ENCODE measurements at regions of chr9 and their contacts with region 1.

Region 1: GRCh38 chr9:34899535-34900158 is 58.4 kb upstream of the PHF24 start:
- DNase-seq: peak; percentile 67 to 90 (median 76)
- ATAC-seq: peak; percentile 100
- H3K4me3 ChIP-seq: no peak overlapping the region
- H3K4me3 Mint-ChIP-seq: no peak overlapping the region
- H3K27ac ChIP-seq: no peak overlapping the region
- H3K27ac Mint-ChIP-seq: no peak overlapping the region
- H3K4me1 ChIP-seq: no peaks in the 10 kb centered on the region
- H3K4me1 Mint-ChIP-seq: no peaks in the 10 kb centered on the region
- H3K27me3 ChIP-seq: peaks cover 7 to 20% of the 10 kb centered on the region in 2 experiments
- H3K27me3 Mint-ChIP-seq: peaks cover 57% of the 10 kb centered on the region
- CTCF ChIP-seq: peak; percentile 88

Region 2: DNA sequence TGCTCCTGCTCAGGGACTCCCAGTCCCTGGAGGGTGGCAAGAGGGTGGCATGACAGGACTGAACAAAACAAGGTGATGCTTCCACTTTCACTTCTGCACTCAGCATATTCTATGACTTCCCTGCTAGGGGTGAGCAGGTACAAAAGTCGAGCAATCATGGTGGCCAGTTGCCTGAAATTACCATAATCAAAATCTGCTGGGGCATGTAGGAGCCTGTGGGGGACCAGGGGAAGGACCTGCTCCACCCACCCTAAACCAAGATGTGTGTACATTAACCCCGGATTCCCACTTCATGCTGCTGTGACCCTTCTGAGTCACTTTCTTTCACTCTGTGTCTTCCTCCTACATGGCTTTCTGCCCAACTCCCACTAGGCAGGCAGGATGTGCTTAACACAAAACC is 14.9 kb before region 1 on chr9:
- CTCF ChIA-PET with region 1: interaction called, 15 read pairs
- POLR2A ChIA-PET with region 1: no interaction called
- intact Hi-C with region 1: no loop called
- DNase-seq: peak in 1 of 14 experiments; percentile 15
- ATAC-seq: no peak
- H3K4me3 ChIP-seq: no peak overlapping the region
- H3K4me3 Mint-ChIP-seq: no peak overlapping the region
- H3K27ac ChIP-seq: no peak overlapping the region
- H3K27ac Mint-ChIP-seq: no peak overlapping the region
- H3K4me1 ChIP-seq: peaks cover 8% of the 10 kb centered on the region
- H3K4me1 Mint-ChIP-seq: no peaks in the 10 kb centered on the region
- H3K27me3 ChIP-seq: no peaks in the 10 kb centered on the region
- H3K27me3 Mint-ChIP-seq: peaks cover 8% of the 10 kb centered on the region
- CTCF ChIP-seq: no peak

Region 3: DNA sequence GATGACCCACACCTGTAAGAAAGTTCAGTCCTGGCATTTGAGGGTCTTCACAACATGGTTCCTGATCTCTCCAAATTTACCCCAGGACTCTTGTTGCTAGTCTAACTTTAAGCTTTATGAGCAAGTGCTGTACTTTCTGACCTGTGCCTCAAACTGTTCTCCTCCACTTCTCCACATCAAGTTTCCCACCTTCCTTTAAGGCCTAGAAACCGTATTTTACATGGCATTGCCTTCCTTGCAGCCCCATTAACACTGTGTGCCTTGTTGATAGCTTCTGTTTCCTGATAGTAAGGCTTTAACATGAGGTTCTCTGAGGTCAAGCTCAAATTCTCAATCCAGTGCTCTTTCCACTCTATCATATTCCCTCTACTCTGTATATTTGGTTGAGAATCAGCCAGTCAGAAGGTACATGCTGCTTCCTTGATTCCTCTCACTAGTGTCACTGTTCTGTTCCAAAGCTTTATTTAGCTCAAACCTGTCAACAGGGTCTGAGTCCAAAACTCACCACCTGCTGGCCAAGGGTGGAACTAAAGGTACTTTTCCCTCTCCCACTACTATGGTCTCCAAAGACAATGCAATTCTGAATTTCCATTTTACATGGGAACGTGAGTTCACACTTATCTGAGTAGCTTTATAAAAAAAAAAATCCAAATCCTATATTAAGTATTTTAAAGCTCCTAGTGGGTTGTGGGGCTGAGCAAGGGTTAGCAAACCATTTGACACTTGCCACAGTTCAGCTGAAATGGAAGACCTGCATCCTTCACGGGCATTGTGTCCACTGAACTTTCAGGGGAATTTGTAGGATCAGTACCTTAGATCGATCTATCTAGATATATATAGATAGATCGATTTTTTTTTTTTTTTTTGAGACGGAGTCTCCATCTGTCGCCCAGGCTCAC is 151.7 kb after region 1 on chr9:
- CTCF ChIA-PET with region 1: interaction called, 47 read pairs
- POLR2A ChIA-PET with region 1: interaction called, 16 read pairs
- intact Hi-C with region 1: loop called (anchors 1 kb)
- DNase-seq: peak; percentile 17 to 69 (median 44)
- ATAC-seq: peak; percentile 85
- H3K4me3 ChIP-seq: no peak overlapping the region
- H3K4me3 Mint-ChIP-seq: no peak overlapping the region
- H3K27ac ChIP-seq: no peak overlapping the region
- H3K27ac Mint-ChIP-seq: no peak overlapping the region
- H3K4me1 ChIP-seq: no peaks in the 10 kb centered on the region
- H3K4me1 Mint-ChIP-seq: peaks cover 5% of the 10 kb centered on the region
- H3K27me3 ChIP-seq: no peaks in the 10 kb centered on the region
- H3K27me3 Mint-ChIP-seq: no peaks in the 10 kb centered on the region
- CTCF ChIP-seq: peak; percentile 70

Region 4: DNA sequence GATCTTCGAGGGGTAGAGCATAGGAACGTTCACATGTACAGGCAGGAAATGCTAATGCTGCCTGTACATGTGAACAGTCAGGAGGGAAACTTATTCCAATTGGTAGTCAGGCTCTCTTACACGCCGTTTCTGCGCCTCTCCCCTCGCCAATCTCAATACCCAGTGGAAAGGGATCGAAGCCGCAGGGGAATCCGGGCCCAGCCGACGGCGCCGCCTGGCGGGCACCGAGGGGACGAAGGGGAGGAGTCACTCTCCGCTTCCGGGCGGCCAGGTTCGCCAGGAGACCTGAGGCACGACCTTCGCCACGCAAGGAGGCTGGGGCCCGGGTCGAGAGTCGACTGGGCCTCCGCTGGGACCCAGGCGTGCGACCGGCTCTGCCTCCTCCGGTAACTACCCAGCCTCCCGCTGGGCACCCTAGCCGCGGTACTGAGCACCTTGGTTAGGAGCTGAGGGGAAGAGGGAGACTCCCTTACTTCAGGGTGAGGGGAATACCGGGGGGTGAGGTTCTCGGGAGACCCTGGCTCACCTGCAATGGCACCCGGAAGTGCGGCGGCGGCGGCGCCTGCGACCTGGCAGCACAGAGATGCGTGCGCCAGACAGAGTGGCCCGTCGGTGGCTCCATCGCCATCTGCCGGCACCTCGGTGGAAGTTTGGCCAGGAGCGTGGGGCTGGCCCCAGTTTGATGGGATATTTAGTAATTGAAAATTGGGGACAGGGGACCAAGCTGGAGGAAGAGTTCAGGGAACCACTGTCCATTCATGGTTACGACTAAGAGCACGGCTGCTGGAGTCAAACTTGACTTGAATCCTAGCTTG is 196.6 kb after region 1 on chr9 and contains the start of gene PIGO:
- CTCF ChIA-PET with region 1: interaction called, 27 read pairs
- POLR2A ChIA-PET with region 1: interaction called, 13 read pairs
- intact Hi-C with region 1: loop called (anchors 1 kb)
- DNase-seq: peak; percentile 81 to 95 (median 88)
- ATAC-seq: peak; percentile 88
- H3K4me3 ChIP-seq: peak within 1 kb of the TSS; percentile 82
- H3K4me3 Mint-ChIP-seq: peak within 1 kb of the TSS; percentile 92
- H3K27ac ChIP-seq: peak within 1 kb of the TSS; percentile 96 to 99
- H3K27ac Mint-ChIP-seq: peak within 1 kb of the TSS; percentile 93
- H3K4me1 ChIP-seq: peaks cover 26% of the 10 kb centered on the region
- H3K4me1 Mint-ChIP-seq: peaks cover 43% of the 10 kb centered on the region
- H3K27me3 ChIP-seq: no peaks in the 10 kb centered on the region
- H3K27me3 Mint-ChIP-seq: no peaks in the 10 kb centered on the region
- CTCF ChIP-seq: peak; percentile 81
- total RNA-seq, gene PIGO: 17.5 to 18.9 TPM

Region 5: GRCh38 chr9:35258676-35259474 is 359.2 kb after region 1 on chr9:
- CTCF ChIA-PET with region 1: interaction called, 3 read pairs
- POLR2A ChIA-PET with region 1: interaction called, 4 read pairs
- intact Hi-C with region 1: loop called (anchors 1 to 2 kb)
- DNase-seq: peak; percentile 17 to 67 (median 34)
- ATAC-seq: peak; percentile 43
- H3K4me3 ChIP-seq: no peak overlapping the region
- H3K4me3 Mint-ChIP-seq: no peak overlapping the region
- H3K27ac ChIP-seq: no peak overlapping the region
- H3K27ac Mint-ChIP-seq: no peak overlapping the region
- H3K4me1 ChIP-seq: no peaks in the 10 kb centered on the region
- H3K4me1 Mint-ChIP-seq: no peaks in the 10 kb centered on the region
- H3K27me3 ChIP-seq: peaks cover 0 to 3% of the 10 kb centered on the region in 2 experiments
- H3K27me3 Mint-ChIP-seq: peaks cover 11% of the 10 kb centered on the region
- CTCF ChIP-seq: peak; percentile 64

Region 6: DNA sequence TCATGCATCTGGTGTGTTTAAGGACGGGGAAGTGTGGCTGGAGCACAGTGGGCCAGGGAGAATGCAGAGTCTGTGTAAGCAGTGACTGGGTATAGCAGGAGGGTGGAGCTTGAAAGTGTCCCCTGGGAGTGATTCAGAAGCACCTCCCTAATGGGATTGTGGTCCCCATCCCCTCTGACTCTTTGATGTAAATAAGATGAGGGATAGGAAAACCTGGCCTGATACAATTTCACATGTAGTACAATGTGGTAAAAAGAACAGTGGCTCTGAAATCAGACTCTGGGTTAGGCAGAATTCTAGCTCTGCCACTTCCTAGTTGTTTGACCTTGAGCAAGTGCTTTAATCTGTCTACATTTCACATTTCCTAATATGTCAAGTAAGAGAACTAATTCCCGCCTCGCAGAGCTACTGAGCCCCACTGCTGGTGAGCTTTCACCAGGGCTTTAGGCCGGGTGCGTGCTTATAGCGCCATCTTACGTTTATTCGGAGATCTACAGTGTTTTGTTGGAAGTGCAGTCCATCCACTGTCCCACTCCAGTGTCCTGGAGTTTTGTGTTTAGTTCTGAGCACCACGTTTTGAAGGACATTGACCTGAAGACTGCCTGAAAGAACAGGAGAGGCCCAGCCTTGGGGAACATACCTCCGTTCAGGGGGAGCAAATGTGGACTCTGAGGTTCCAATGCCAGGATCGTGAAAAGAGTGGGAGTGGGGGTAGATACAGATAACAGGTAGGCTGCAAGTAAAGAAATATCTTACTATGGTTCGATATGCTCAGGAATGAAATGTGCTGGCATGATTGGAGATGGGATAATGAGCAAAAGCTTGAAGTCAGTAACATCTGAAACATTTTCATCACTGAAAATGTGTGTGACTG is 654.3 kb after region 1 on chr9:
- CTCF ChIA-PET with region 1: interaction called, 8 read pairs
- POLR2A ChIA-PET with region 1: no interaction called
- intact Hi-C with region 1: loop called (anchors 1 to 5 kb)
- DNase-seq: peak in 11 of 14 experiments; percentile 6 to 69 (median 14)
- ATAC-seq: peak; percentile 62
- H3K4me3 ChIP-seq: no peak overlapping the region
- H3K4me3 Mint-ChIP-seq: no peak overlapping the region
- H3K27ac ChIP-seq: no peak overlapping the region
- H3K27ac Mint-ChIP-seq: no peak overlapping the region
- H3K4me1 ChIP-seq: no peaks in the 10 kb centered on the region
- H3K4me1 Mint-ChIP-seq: no peaks in the 10 kb centered on the region
- H3K27me3 ChIP-seq: no peaks in the 10 kb centered on the region
- H3K27me3 Mint-ChIP-seq: no peaks in the 10 kb centered on the region
- CTCF ChIP-seq: peak; percentile 46